PC-9 (cell line): ENCODE measurements at regions of chr3 and their contacts with region 1.

Region 1: DNA sequence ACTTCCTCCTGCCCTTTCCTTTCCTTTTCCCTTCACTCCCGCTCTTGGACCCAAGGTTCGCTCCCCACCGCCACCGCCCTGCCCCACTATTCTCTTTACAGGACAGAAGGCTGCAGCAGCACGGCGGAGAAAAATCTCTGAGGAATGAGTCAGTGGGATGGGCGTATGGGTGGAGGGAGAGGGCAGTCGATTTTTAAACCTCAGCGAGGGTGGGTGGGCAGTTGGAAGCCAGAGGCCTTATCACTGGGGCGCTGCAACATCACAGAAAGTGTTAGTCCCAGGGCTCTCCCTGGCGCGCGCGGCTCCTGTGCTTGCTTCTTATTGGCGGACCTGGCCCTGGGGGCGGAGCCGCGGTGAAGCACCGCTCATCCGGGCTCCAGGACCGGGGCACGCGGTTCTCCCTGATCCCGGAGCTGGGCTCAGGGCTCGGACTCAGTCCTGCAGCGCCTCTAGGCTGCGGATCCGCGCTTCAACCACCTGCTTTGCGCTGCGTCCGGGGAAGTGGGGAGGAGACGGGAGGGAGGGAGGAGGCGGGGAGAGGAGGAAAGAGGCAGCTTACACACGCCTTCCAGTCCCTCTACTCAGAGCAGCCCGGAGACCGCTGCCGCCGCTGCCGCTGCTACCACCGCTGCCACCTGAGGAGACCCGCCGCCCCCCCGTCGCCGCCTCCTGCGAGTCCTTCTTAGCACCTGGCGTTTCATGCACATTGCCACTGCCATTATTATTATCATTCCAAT is at the start of gene ALCAM:
- DNase-seq: peak; percentile 93 to 99
- H3K4me3 ChIP-seq: peak within 1 kb of the TSS; percentile 78
- H3K27ac ChIP-seq: peak within 1 kb of the TSS; percentile 86
- H3K4me1 ChIP-seq: peaks cover 29% of the 10 kb centered on the region
- H3K27me3 ChIP-seq: no peaks in the 10 kb centered on the region
- CTCF ChIP-seq: peak; percentile 70
- total RNA-seq, gene ALCAM: 110 and 132 TPM in 2 replicates

Region 2: DNA sequence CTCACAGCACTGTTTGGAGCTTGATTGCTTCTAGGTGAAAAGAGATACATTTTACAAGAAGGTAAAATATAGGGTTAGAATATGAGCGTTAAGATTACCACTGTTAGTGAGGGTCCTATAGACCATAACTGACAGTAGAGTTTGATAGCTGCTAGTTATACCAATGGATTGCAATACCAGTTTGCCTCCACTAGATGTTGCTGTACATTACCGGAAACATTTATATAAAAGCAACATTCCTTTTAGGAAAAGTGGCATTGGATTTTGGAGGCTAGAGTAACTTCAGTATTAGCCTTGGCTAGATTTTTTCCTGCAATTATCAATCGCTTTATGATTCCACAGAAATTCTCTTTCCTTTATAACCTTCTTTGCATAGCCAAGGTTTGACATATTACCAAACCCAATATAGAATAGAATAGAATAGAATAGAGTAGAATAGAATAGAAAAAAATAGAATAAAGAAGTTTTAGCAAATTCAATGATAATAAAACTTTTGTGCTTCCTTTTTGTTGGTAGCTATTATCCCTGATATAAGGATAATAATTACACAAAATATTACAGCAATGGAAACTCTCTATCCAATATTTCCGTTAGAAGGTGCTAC is 1093.3 kb before region 1 on chr3:
- CTCF ChIA-PET with region 1: no interaction called
- POLR2A ChIA-PET with region 1: no interaction called
- intact Hi-C with region 1: loop called (anchors 2 kb)
- DNase-seq: no peak
- H3K4me3 ChIP-seq: no peak overlapping the region
- H3K27ac ChIP-seq: no peak overlapping the region
- H3K4me1 ChIP-seq: no peaks in the 10 kb centered on the region
- H3K27me3 ChIP-seq: no peaks in the 10 kb centered on the region
- CTCF ChIP-seq: peak; percentile 95

Region 3: DNA sequence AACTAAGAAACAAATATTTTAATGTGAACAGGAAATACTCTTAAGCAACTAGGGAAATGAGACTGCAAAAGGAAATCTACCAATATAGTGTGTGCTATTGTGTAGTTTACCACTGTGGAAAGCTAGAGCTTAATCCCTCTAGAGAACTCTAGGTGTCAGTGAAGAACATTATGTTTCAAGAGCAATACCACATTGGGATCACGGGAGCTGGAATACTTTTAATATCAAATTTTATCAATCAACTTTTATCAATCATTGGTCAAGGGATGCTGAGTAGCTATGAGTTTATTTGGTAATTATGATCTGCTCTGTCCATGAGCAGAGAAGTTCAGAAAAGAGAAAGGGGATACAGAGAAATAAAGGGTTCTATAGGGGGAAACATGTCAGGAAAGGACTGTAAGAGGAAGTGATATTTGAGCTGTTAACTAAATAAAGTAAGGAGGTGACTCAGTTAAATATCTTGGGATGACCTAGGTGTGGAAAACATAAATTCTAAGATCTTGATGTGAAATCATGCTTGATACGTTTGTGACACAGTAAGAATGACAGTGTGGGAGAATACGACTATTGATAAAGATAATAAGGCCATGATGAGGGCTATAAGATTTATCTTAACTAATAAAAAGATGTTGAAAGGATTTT is 762.0 kb before region 1 on chr3:
- CTCF ChIA-PET with region 1: no interaction called
- POLR2A ChIA-PET with region 1: interaction called, 6 read pairs
- intact Hi-C with region 1: loop called (anchors 2 kb)
- DNase-seq: peak in 1 of 2 experiments; percentile 50
- H3K4me3 ChIP-seq: peak overlapping the region; percentile 11; the same call in 1 of the 2 replicates
- H3K27ac ChIP-seq: no peak overlapping the region
- H3K4me1 ChIP-seq: peaks cover 8% of the 10 kb centered on the region
- H3K27me3 ChIP-seq: no peaks in the 10 kb centered on the region
- CTCF ChIP-seq: peak; percentile 57

Region 4: DNA sequence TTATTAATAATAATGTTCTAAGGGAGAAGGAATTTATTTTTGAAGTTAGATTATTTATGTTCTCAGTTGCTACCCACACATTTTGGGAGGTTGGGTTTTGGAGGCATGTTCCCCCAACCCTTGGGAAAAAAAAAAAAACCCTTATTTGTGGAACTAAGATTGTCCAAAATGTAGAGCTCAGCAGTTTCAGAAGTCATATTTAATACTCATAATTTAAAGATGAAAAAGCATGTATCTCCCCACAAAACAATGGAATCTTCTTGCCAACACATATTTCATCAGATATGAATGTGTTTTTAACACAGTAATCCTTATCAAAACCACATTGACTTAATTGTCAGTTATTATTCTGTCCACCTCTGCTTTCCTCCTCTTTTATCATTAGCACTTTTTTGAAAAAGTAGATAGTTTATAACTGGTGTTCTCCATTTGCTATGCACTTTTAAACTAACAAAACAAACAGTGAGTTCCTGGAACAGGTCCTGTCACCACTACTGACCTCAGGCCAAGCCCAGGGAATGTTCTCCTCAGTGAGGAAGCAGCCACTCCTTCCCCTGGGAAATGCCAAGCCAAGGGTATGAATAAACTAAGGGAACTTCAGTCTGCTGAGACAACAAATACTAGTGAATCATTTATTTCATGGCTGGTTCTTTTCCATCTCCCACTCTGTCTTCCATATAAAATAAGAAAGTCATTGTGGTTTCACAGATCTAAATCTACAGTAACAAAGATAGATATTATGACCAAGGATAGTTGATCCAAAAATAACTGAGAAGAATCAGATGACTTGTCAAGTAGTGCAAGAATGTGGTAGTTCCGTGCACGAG is 414.1 kb before region 1 on chr3:
- CTCF ChIA-PET with region 1: no interaction called
- POLR2A ChIA-PET with region 1: no interaction called
- intact Hi-C with region 1: loop called (anchors 10 kb)
- DNase-seq: peak in 1 of 2 experiments; percentile 35
- H3K4me3 ChIP-seq: no peak overlapping the region
- H3K27ac ChIP-seq: no peak overlapping the region
- H3K4me1 ChIP-seq: no peaks in the 10 kb centered on the region
- H3K27me3 ChIP-seq: no peaks in the 10 kb centered on the region
- CTCF ChIP-seq: no peak

Region 5: GRCh38 chr3:105402287-105402801 is 35.9 kb after region 1 on chr3:
- CTCF ChIA-PET with region 1: interaction called, 14 read pairs
- POLR2A ChIA-PET with region 1: interaction called, 25 read pairs
- intact Hi-C with region 1: loop called (anchors 1 kb)
- DNase-seq: peak; percentile 93 to 98
- H3K4me3 ChIP-seq: peak overlapping the region; percentile 40; the same call in 1 of the 2 replicates
- H3K27ac ChIP-seq: peak overlapping the region; percentile 91
- H3K4me1 ChIP-seq: peaks cover 30% of the 10 kb centered on the region
- H3K27me3 ChIP-seq: no peaks in the 10 kb centered on the region
- CTCF ChIP-seq: no peak

Region 6: GRCh38 chr3:105868742-105869530 is 502.4 kb after region 1 on chr3 and contains the start of gene CBLB:
- CTCF ChIA-PET with region 1: no interaction called
- POLR2A ChIA-PET with region 1: interaction called, 6 read pairs
- intact Hi-C with region 1: loop called (anchors 5 kb)
- DNase-seq: peak; percentile 95 to 98
- H3K4me3 ChIP-seq: peak within 1 kb of the TSS; percentile 69
- H3K27ac ChIP-seq: peak within 1 kb of the TSS; percentile 64
- H3K4me1 ChIP-seq: peaks cover 36% of the 10 kb centered on the region
- H3K27me3 ChIP-seq: no peaks in the 10 kb centered on the region
- CTCF ChIP-seq: no peak
- total RNA-seq, gene CBLB: 29.8 and 44.0 TPM in 2 replicates

Region 7: DNA sequence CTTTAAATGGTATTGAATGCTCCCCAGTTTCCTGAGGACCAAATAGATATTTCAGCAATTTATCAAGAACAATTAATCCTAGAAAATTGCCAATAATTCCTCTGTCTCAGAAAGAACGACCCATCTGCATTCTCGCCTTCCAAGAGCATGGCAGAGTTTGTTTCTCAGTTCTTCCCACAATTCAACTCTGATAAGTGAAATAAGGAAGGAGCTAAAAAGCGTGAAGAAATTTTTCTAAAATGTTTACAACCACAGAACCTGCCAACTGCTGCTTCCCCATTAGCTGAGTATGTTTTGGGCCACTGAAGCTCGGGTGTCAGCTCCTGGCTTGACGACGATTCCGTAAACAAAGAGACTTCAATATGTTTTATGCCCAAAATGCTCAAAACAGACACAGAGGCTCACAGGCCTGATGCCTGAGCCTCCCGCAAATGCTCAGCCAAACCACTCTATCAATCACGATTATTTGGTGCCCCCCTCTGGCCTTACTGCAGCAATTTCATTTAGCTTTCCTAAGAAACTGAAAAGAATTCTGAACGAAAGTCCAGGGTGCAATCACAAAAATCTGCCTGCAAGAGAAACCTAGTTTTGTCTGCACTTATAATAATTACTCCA is 1751.5 kb after region 1 on chr3:
- CTCF ChIA-PET with region 1: no interaction called
- POLR2A ChIA-PET with region 1: no interaction called
- intact Hi-C with region 1: loop called (anchors 5 kb)
- DNase-seq: peak in 1 of 2 experiments; percentile 38
- H3K4me3 ChIP-seq: no peak overlapping the region
- H3K27ac ChIP-seq: no peak overlapping the region
- H3K4me1 ChIP-seq: no peaks in the 10 kb centered on the region
- H3K27me3 ChIP-seq: no peaks in the 10 kb centered on the region
- CTCF ChIP-seq: peak; percentile 83